Transverse colon (tissue), 4 donors: ENCODE measurements at regions of chr14 and their contacts with region 1.

Region 1: DNA sequence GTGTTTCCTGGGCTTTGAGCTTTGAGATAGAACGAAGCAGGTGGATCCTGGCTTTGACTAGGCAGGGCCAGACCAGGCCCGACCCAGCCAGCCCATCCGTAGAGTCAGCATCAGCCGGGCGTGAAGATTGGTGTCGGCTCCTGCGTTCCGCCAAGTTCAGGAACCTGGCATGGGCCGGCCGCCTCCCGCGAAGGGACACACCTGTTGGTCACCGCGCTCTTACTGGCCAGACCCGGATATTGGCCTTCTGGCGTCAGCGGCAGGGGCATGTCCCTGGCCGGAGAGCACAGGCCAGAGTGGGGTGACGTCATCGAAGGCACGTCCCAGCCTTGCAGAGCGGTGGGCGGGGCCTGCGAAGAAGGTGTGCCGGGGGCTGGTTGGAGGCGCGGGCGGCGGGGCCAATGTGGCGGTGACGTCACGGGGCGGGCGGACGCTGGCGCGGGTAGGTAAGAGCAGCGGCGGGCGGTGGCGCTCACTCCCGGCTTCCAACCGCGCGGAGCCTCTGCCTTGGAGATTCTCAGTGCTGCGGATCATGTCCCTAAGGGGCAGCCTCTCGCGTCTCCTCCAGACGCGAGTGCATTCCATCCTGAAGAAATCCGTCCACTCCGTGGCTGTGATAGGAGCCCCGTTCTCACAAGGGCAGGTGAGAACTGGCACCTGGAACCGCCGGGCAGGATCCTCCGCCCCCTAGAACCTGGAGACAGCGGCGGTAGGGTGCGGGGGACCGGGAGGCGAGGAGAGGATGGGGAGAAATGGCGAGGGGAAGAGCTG is at the start of gene ARG2:
- DNase-seq: peak; percentile 100
- H3K4me3 ChIP-seq: peak within 1 kb of the TSS; percentile 35 to 69 (median 51)
- H3K27ac ChIP-seq: peak within 1 kb of the TSS; percentile 65 to 85 (median 81)
- H3K4me1 ChIP-seq: peaks cover 5 to 28% (median 18%) of the 10 kb centered on the region in 4 donors
- H3K27me3 ChIP-seq: no peaks in the 10 kb centered on the region
- CTCF ChIP-seq: peak in 1 of 5 experiments; percentile 27
- EP300 ChIP-seq: no peak
- POLR2A ChIP-seq: peak; percentile 86
- total RNA-seq, gene ARG2: 7.5 to 18.8 (median 9.2) TPM in 3 of 4 donors, not detected in the other

Region 2: GRCh38 chr14:67276131-67276530 is 343.5 kb before region 1 on chr14:
- in situ Hi-C with region 1: no loop called
- intact Hi-C with region 1: no loop called
- DNase-seq: no peak
- H3K4me3 ChIP-seq: no peak overlapping the region
- H3K27ac ChIP-seq: no peak overlapping the region
- H3K4me1 ChIP-seq: peaks cover 0 to 25% (median 10%) of the 10 kb centered on the region in 4 donors
- H3K27me3 ChIP-seq: no peaks in the 10 kb centered on the region
- CTCF ChIP-seq: no peak
- EP300 ChIP-seq: no peak
- POLR2A ChIP-seq: no peak

Region 3: GRCh38 chr14:67666750-67667449 is 47.3 kb after region 1 on chr14:
- in situ Hi-C with region 1: loop called in 1 of 4 experiments (anchors 10 kb)
- intact Hi-C with region 1: loop called (anchors 5 kb)
- DNase-seq: no peak
- H3K4me3 ChIP-seq: no peak overlapping the region
- H3K27ac ChIP-seq: peak overlapping the region in 1 of 4 donors; percentile 5
- H3K4me1 ChIP-seq: peaks cover 0 to 31% (median 13%) of the 10 kb centered on the region in 4 donors
- H3K27me3 ChIP-seq: no peaks in the 10 kb centered on the region
- CTCF ChIP-seq: peak; percentile 39 to 74 (median 58)
- EP300 ChIP-seq: no peak
- POLR2A ChIP-seq: no peak

Region 4: GRCh38 chr14:67674481-67675169 is 55.0 kb after region 1 on chr14 and contains the start of gene VTI1B:
- in situ Hi-C with region 1: loop called in 1 of 4 experiments (anchors 10 kb)
- intact Hi-C with region 1: loop called (anchors 5 kb)
- DNase-seq: peak; percentile 79
- H3K4me3 ChIP-seq: peak within 1 kb of the TSS; percentile 78 to 99 (median 98)
- H3K27ac ChIP-seq: peak within 1 kb of the TSS; percentile 93 to 99 (median 94)
- H3K4me1 ChIP-seq: peaks cover 7 to 31% (median 23%) of the 10 kb centered on the region in 4 donors
- H3K27me3 ChIP-seq: no peaks in the 10 kb centered on the region
- CTCF ChIP-seq: peak in 1 of 5 experiments; percentile 3
- EP300 ChIP-seq: no peak
- POLR2A ChIP-seq: peak; percentile 87
- total RNA-seq, gene VTI1B: 59.5 to 74.8 (median 67.5) TPM